ENCODE measurements at regions of chr5 and their contacts with region 1.

Region 1: DNA sequence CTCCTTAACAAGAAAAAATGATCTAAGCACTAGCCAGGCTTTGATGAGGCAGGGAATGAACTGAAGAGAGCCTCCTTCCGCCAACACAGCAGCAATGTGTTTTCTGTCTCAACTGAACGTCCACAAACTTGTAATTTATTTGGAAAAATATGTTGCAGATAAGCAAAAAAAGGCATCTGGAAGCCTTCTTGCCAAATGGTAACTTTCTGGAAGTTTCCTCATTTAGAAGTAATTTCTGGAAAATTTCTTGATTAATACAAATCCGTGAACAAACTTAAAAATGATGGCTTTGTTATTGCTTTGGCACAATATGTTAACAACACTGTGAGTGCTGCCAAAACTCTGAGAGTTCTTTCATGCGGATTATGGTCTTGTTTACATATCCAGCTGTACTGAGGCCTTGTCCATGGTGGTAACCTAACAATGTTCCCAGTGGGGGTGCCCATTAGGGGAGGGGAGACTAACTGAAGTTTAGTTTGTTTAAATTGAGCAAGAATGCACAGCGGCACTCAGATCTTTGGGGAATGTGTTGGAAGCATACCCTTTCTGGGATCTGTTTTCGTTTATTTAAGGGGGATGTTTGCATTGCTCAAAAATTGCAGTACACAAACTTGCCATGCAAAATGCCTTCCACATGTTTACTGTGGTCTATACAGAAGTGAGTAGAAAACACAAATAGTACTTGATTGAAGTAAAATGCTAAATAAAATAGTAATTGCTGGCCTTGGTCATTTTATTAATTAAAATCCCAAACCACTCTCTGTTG is 334.7 kb downstream of the NR2F1-AS1 start:
- DNase-seq: peak; percentile 47
- ATAC-seq: peak; percentile 59
- H3K4me3 ChIP-seq: no peak overlapping the region
- H3K27ac ChIP-seq: peak overlapping the region; percentile 41; the same call in 1 of the 2 replicates
- H3K4me1 ChIP-seq: peaks cover 6% of the 10 kb centered on the region
- H3K27me3 ChIP-seq: no peaks in the 10 kb centered on the region
- CTCF ChIP-seq: no peak
- POLR2A ChIP-seq: no peak
- RAD21 ChIP-seq: no peak

Region 2: DNA sequence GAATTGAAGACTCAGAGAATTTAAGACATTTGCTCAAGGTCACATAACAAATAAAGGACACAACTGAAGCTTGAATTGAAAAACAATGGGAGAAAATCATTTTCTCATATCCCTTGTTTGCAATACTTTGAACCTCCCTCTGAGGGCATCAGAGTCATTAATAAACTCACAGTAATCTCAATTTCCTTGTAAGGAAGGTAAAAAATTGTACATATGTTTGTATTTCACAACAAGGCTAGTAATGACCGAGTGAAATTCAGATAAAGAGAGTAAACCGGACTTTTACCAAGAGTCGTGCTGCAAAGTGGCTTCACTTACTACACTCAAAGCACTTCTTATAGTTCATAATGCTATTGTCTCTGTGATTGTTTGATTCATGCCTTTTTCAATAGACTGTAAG is 330.2 kb before region 1 on chr5:
- CTCF ChIA-PET with region 1: no interaction called
- POLR2A ChIA-PET with region 1: no interaction called
- dilution Hi-C with region 1: no loop called
- in situ Hi-C with region 1: no loop called
- intact Hi-C with region 1: loop called (anchors 10 kb)
- DNase-seq: peak; percentile 44
- ATAC-seq: peak; percentile 49
- H3K4me3 ChIP-seq: no peak overlapping the region
- H3K27ac ChIP-seq: no peak overlapping the region
- H3K4me1 ChIP-seq: peaks cover 2% of the 10 kb centered on the region; the same call in 1 of the 2 replicates
- H3K27me3 ChIP-seq: no peaks in the 10 kb centered on the region
- CTCF ChIP-seq: peak; percentile 44
- POLR2A ChIP-seq: no peak
- RAD21 ChIP-seq: peak; percentile 43

Region 3: DNA sequence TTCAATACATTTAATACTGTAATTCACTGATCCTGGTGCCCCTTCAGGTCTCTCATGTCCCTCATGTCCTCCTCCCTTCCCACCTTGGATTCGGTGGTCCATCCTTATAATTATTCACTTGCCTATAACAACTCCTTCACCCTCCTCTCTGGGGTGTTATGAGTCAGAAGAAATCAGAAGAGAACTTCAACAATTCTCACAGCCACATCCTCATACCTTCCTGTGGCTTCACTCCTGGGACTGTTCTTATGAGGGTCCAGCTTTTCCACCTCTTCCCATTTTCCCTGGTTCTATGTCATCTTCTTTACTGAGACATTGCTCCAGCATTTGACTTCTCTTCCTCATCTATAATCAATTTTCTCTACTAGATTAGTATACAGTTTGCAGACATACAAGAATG is 71.3 kb before region 1 on chr5:
- CTCF ChIA-PET with region 1: no interaction called
- POLR2A ChIA-PET with region 1: no interaction called
- dilution Hi-C with region 1: no loop called
- in situ Hi-C with region 1: no loop called
- intact Hi-C with region 1: no loop called
- DNase-seq: no peak
- ATAC-seq: no peak
- H3K4me3 ChIP-seq: no peak overlapping the region
- H3K27ac ChIP-seq: no peak overlapping the region
- H3K4me1 ChIP-seq: no peaks in the 10 kb centered on the region; the same call in 1 of the 2 replicates
- H3K27me3 ChIP-seq: no peaks in the 10 kb centered on the region
- CTCF ChIP-seq: no peak
- POLR2A ChIP-seq: no peak
- RAD21 ChIP-seq: no peak

Region 4: GRCh38 chr5:93189707-93190120 is 56.6 kb before region 1 on chr5:
- CTCF ChIA-PET with region 1: no interaction called
- POLR2A ChIA-PET with region 1: no interaction called
- dilution Hi-C with region 1: no loop called
- in situ Hi-C with region 1: no loop called
- intact Hi-C with region 1: loop called (anchors 2 kb)
- DNase-seq: peak; percentile 97
- ATAC-seq: peak; percentile 54
- H3K4me3 ChIP-seq: no peak overlapping the region
- H3K27ac ChIP-seq: no peak overlapping the region
- H3K4me1 ChIP-seq: peaks cover 7% of the 10 kb centered on the region
- H3K27me3 ChIP-seq: no peaks in the 10 kb centered on the region
- CTCF ChIP-seq: no peak
- POLR2A ChIP-seq: no peak
- RAD21 ChIP-seq: peak; percentile 9; the same call in 1 of the 2 replicates

Region 5: GRCh38 chr5:93452255-93452654 is 206.0 kb after region 1 on chr5:
- CTCF ChIA-PET with region 1: no interaction called
- POLR2A ChIA-PET with region 1: no interaction called
- dilution Hi-C with region 1: no loop called
- in situ Hi-C with region 1: no loop called
- intact Hi-C with region 1: no loop called
- DNase-seq: no peak
- ATAC-seq: peak; percentile 51
- H3K4me3 ChIP-seq: no peak overlapping the region
- H3K27ac ChIP-seq: no peak overlapping the region
- H3K4me1 ChIP-seq: no peaks in the 10 kb centered on the region
- H3K27me3 ChIP-seq: no peaks in the 10 kb centered on the region
- CTCF ChIP-seq: no peak
- POLR2A ChIP-seq: no peak
- RAD21 ChIP-seq: no peak